Sciatic nerve (tissue), 2 donors: ENCODE measurements at regions of chr6 and their contacts with region 1.

Region 1: GRCh38 chr6:25266456-25267100 is 12.6 kb upstream of the CARMIL1 start:
- DNase-seq: no peak
- ATAC-seq: peak; percentile 85

Region 2: GRCh38 chr6:25490018-25490801 is 223.6 kb after region 1 on chr6:
- intact Hi-C with region 1: loop called (anchors 5 kb)
- DNase-seq: peak; percentile 81
- ATAC-seq: peak; percentile 95